Psoas muscle (tissue), 8 donors: ENCODE measurements at regions of chr17 and their contacts with region 1.

Region 1: GRCh38 chr17:76687308-76688164 is 23.2 kb downstream of the MXRA7 start:
- DNase-seq: peak; percentile 76 to 79
- ATAC-seq: peak; percentile 5 to 46 (median 31)
- H3K4me3 ChIP-seq: no peak overlapping the region
- H3K27ac ChIP-seq: peak overlapping the region; percentile 62
- H3K4me1 ChIP-seq: peaks cover 33% of the 10 kb centered on the region
- H3K27me3 ChIP-seq: no peaks in the 10 kb centered on the region
- CTCF ChIP-seq: no peak

Region 2: DNA sequence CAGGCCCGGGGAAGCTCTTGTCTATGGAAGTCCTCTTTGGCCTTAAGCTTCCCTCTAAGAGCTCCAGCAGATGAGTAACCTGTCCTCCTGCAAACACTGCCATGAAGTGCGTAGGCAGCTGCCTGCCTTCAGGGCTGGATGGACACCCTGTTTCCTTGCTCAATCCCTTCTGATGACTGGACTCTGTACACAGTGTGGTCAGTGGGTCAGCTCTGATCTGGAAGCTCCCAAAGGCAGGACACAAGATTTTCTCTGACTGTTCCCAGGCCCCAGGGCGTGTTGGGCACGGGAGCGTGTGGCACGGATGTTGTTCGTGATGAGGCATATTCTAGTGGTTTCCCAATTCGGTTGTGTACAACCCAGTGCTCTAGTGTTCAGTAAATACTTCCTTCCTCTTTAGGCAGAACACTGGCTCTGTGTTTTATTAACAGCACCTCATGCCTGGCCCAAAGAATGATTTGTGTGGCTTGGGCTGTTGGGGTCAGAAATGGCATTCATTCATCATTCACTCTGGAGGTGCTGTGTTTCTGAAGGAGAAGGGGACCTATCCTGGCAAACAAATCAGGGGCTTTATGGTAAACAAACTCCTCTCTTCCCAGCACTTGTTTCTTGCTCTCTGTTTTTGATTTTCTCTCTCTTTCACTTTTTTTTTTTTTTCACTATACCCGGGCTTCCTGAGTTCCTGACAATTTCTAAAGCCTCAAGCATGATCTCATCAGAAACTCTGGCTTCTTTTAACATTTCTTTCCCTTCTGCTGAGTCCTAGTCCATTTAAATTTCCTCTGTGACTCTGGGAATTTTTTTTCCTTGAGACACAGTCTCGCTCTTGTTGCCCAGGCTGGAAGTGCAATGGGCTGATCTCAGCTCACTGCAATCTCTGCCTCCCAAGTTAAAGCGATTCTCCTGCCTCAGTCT is 435.2 kb before region 1 on chr17:
- intact Hi-C with region 1: no loop called
- DNase-seq: peak; percentile 88 to 93
- ATAC-seq: peak; percentile 90 to 97 (median 92)
- H3K4me3 ChIP-seq: no peak overlapping the region
- H3K27ac ChIP-seq: peak overlapping the region; percentile 87
- H3K4me1 ChIP-seq: peaks cover 54% of the 10 kb centered on the region
- H3K27me3 ChIP-seq: no peaks in the 10 kb centered on the region
- CTCF ChIP-seq: no peak

Region 3: DNA sequence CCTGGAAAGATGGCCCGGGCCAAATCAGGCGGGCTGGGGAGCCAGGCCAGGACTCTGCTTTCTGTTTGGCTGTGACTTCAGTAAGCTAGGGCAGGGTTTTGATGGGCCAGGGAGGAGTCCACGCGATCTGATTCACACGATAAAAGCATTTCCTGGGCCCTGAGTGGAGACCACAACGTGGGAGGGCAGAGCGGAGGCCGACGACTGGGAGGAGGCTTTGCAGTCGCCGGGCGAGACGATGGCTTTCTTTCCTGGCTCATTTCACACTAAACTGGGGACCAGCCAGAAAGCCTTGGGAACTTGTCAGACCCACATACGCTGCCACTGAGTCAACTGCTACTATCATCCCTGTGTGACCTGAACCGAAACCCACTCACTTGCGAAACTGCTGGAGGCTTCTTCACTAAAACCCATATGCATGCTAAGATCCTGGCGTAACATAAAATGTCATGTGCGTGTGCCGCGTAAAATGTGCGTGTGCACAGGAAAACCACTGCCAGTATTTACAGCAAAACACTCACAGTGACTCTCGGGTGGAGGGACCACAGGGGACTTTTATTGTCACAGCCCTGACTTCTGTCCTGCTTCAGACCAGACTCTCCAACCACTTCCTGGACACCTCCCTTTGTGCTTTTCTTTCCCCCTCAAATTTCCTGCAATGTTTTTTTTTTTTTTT is 172.1 kb before region 1 on chr17:
- intact Hi-C with region 1: loop called in 1 of 2 experiments (anchors 5 kb)
- DNase-seq: peak; percentile 85 to 90
- ATAC-seq: peak; percentile 89 to 94 (median 91)
- H3K4me3 ChIP-seq: peak overlapping the region; percentile 49
- H3K27ac ChIP-seq: peak overlapping the region; percentile 86
- H3K4me1 ChIP-seq: peaks cover 11% of the 10 kb centered on the region
- H3K27me3 ChIP-seq: no peaks in the 10 kb centered on the region
- CTCF ChIP-seq: no peak

Region 4: DNA sequence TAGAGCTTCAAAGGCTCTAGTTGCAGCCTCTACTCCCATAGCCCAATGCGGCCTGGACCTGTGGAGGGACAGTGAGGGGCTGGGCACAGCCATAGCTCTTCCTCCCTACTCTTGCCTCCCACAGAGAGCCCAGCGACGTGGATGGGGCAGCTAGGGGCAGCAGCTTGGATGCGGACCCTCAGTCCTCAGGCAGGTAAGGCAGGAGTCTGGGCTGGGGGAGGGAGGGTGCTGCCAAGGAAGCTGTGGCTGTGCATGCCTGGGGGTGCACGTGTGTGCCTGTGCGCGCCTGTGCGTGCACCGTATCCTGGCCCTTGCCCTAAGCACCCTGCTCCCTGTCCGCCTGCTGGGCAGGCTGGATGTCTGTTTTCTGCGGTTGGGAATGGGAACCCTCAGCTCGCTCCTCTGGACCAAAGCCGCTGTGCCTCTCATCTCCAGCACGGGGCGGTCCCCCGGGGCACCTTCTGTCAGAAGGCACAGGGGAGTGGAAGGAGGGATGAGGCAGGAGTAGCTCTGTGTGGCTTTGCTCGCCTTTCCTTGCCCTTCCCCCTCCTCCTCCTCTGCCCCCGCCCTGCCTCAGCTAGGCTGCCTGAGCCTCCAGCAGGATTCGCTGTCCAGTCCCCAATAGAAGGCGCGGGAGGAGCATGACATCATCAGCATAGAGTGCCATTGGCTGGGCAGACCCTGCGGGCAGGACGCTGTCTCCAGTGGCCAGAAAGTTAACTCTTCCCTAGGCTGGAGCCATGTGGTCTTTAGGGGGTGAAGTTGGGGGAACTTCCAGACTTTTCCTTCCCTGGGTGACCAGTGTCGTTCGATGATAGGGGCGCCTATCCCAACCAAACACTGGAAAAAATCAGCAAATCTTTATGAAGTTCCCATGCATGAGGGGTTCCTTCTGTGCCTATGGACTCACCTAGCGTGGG is 146.9 kb before region 1 on chr17:
- intact Hi-C with region 1: no loop called
- DNase-seq: peak; percentile 93 to 96
- ATAC-seq: peak; percentile 97 to 99 (median 98)
- H3K4me3 ChIP-seq: peak overlapping the region; percentile 71
- H3K27ac ChIP-seq: peak overlapping the region; percentile 72
- H3K4me1 ChIP-seq: peaks cover 40% of the 10 kb centered on the region
- H3K27me3 ChIP-seq: peaks cover 0 to 19% (median 9%) of the 10 kb centered on the region in 3 donors
- CTCF ChIP-seq: peak; percentile 14

Region 5: GRCh38 chr17:76643553-76644148 is 43.9 kb before region 1 on chr17 and contains the start of gene ST6GALNAC1:
- intact Hi-C with region 1: no loop called
- DNase-seq: no peak
- ATAC-seq: no peak
- H3K4me3 ChIP-seq: no peak within 1 kb of the TSS
- H3K27ac ChIP-seq: no peak within 1 kb of the TSS
- H3K4me1 ChIP-seq: no peaks in the 10 kb centered on the region
- H3K27me3 ChIP-seq: peaks cover 0 to 2% (median 0%) of the 10 kb centered on the region in 3 donors
- CTCF ChIP-seq: no peak
- total RNA-seq, gene ST6GALNAC1: 0.42 to 3.6 (median 0.88) TPM

Region 6: GRCh38 chr17:76714822-76715495 is 27.4 kb after region 1 on chr17:
- intact Hi-C with region 1: loop called in 1 of 2 experiments (anchors 2 kb)
- DNase-seq: peak; percentile 70 to 78
- ATAC-seq: no peak
- H3K4me3 ChIP-seq: no peak overlapping the region
- H3K27ac ChIP-seq: peak overlapping the region; percentile 89
- H3K4me1 ChIP-seq: peaks cover 42% of the 10 kb centered on the region
- H3K27me3 ChIP-seq: no peaks in the 10 kb centered on the region
- CTCF ChIP-seq: peak; percentile 81